CD8-positive, alpha-beta memory T cell (primary cell): ENCODE measurements at regions of chr2 and their contacts with region 1.

Region 1: DNA sequence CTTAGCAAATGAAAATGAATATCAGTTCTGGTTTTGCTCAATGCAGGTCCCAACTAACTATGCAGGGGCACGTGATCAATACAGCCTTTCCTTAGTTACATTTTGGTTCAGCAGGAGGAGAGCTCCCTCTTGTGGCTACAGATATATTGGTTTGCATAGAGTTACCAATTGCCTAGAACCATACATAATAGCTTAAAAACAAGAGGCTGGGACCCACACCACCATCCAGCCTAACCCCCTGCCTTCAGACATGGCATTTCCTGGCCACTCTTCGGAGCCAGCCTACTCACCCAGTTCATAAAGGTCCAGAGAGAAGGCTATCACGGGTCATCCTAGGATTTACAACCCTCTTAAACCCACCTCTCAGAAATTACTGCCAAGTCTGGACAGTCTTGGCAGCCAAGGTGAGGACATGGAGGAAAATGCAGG is 10.5 kb downstream of the CCDC93 start:
- DNase-seq: peak in 4 of 5 donors; percentile 38 to 68 (median 58)
- H3K4me3 ChIP-seq: no peak overlapping the region
- H3K4me3 Mint-ChIP-seq: no peak overlapping the region
- H3K27ac ChIP-seq: no peak overlapping the region
- H3K27ac Mint-ChIP-seq: peak overlapping the region; percentile 6 to 90 (median 88)
- H3K4me1 ChIP-seq: peaks cover 7% of the 10 kb centered on the region
- H3K4me1 Mint-ChIP-seq: peaks cover 8 to 28% (median 21%) of the 10 kb centered on the region in 3 donors
- H3K27me3 ChIP-seq: no peaks in the 10 kb centered on the region
- H3K27me3 Mint-ChIP-seq: no peaks in the 10 kb centered on the region

Region 2: GRCh38 chr2:117814417-117815264 is 188.8 kb before region 1 on chr2 and contains the start of gene DDX18:
- CTCF ChIA-PET with region 1: interaction called, 43 read pairs
- POLR2A ChIA-PET with region 1: no interaction called
- DNase-seq: peak; percentile 96 to 99 (median 98)
- H3K4me3 ChIP-seq: peak within 1 kb of the TSS; percentile 78
- H3K4me3 Mint-ChIP-seq: peak within 1 kb of the TSS; percentile 82 to 97 (median 92)
- H3K27ac ChIP-seq: peak within 1 kb of the TSS; percentile 95
- H3K27ac Mint-ChIP-seq: peak within 1 kb of the TSS; percentile 95 to 100 (median 99)
- H3K4me1 ChIP-seq: peaks cover 23% of the 10 kb centered on the region
- H3K4me1 Mint-ChIP-seq: peaks cover 39 to 64% (median 62%) of the 10 kb centered on the region in 3 donors
- H3K27me3 ChIP-seq: no peaks in the 10 kb centered on the region
- H3K27me3 Mint-ChIP-seq: peaks cover 0 to 5% of the 10 kb centered on the region in 2 donors
- total RNA-seq, gene DDX18: 147 to 151 TPM

Region 3: DNA sequence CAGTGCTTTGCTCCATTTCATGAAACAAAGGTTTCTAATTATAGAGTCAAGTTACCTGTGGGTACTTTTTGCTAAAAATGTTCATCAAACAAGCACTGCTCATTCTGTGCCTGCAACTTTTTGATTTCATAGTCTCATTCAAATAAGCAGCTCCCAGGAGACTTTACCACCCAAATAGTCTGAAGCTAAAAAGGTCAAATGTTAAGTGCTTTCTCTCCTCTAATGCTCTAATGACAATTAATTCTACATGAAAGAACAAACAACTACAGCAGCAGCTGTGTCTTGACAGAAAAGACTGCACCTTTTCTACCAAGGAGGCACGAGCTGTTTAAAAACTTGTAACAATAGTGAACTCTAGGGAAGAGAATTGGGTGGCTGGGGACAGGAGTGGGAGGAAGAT is 54.8 kb before region 1 on chr2:
- CTCF ChIA-PET with region 1: interaction called, 12 read pairs
- POLR2A ChIA-PET with region 1: no interaction called
- DNase-seq: no peak
- H3K4me3 ChIP-seq: no peak overlapping the region
- H3K4me3 Mint-ChIP-seq: no peak overlapping the region
- H3K27ac ChIP-seq: no peak overlapping the region
- H3K27ac Mint-ChIP-seq: no peak overlapping the region
- H3K4me1 ChIP-seq: no peaks in the 10 kb centered on the region
- H3K4me1 Mint-ChIP-seq: no peaks in the 10 kb centered on the region
- H3K27me3 ChIP-seq: no peaks in the 10 kb centered on the region
- H3K27me3 Mint-ChIP-seq: no peaks in the 10 kb centered on the region

Region 4: DNA sequence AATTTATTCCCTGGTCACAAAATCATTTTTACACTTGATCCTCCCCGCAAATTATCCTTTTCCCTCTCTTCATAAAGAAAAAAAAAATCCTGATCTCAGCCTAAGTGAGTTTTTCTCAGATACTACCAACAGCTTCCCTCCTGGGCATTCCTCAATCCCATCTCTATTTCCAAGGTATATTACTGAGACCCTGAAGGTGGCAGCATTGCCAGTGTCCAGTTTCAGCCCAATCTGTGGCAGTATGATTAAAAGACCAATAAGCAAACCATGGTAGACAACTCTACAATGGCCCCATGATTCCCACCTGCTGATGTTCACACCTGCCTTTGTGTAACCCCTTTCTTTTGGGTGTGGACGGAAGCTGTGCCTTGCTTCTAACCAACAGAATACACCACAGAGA is 34.7 kb before region 1 on chr2:
- CTCF ChIA-PET with region 1: interaction called, 10 read pairs
- POLR2A ChIA-PET with region 1: no interaction called
- DNase-seq: no peak
- H3K4me3 ChIP-seq: no peak overlapping the region
- H3K4me3 Mint-ChIP-seq: no peak overlapping the region
- H3K27ac ChIP-seq: no peak overlapping the region
- H3K27ac Mint-ChIP-seq: peak overlapping the region in 1 of 8 donors; percentile 41
- H3K4me1 ChIP-seq: no peaks in the 10 kb centered on the region
- H3K4me1 Mint-ChIP-seq: peaks cover 0 to 4% (median 4%) of the 10 kb centered on the region in 3 donors
- H3K27me3 ChIP-seq: no peaks in the 10 kb centered on the region
- H3K27me3 Mint-ChIP-seq: no peaks in the 10 kb centered on the region

Region 5: GRCh38 chr2:117987121-117987520 is 16.3 kb before region 1 on chr2:
- CTCF ChIA-PET with region 1: interaction called, 35 read pairs
- POLR2A ChIA-PET with region 1: no interaction called
- DNase-seq: no peak
- H3K4me3 ChIP-seq: no peak overlapping the region
- H3K4me3 Mint-ChIP-seq: no peak overlapping the region
- H3K27ac ChIP-seq: no peak overlapping the region
- H3K27ac Mint-ChIP-seq: peak overlapping the region in 4 of 8 donors; percentile 17 to 94 (median 25)
- H3K4me1 ChIP-seq: no peaks in the 10 kb centered on the region
- H3K4me1 Mint-ChIP-seq: peaks cover 4 to 20% (median 8%) of the 10 kb centered on the region in 3 donors
- H3K27me3 ChIP-seq: no peaks in the 10 kb centered on the region
- H3K27me3 Mint-ChIP-seq: no peaks in the 10 kb centered on the region

Region 6: GRCh38 chr2:118013724-118014491 is 10.5 kb after region 1 on chr2 and contains the start of gene CCDC93:
- CTCF ChIA-PET with region 1: interaction called, 30 read pairs
- POLR2A ChIA-PET with region 1: interaction called, 9 read pairs
- DNase-seq: peak; percentile 83 to 92 (median 89)
- H3K4me3 ChIP-seq: peak within 1 kb of the TSS; percentile 99
- H3K4me3 Mint-ChIP-seq: peak within 1 kb of the TSS; percentile 90 to 98 (median 96)
- H3K27ac ChIP-seq: peak within 1 kb of the TSS; percentile 94
- H3K27ac Mint-ChIP-seq: peak within 1 kb of the TSS; percentile 80 to 98 (median 94)
- H3K4me1 ChIP-seq: peaks cover 22% of the 10 kb centered on the region
- H3K4me1 Mint-ChIP-seq: peaks cover 33 to 48% (median 40%) of the 10 kb centered on the region in 3 donors
- H3K27me3 ChIP-seq: no peaks in the 10 kb centered on the region
- H3K27me3 Mint-ChIP-seq: peaks cover 8 to 14% of the 10 kb centered on the region in 2 donors
- total RNA-seq, gene CCDC93: 32.7 to 33.5 TPM